Activated CD8-positive, alpha-beta memory T cell treated with anti-CD3 and anti-CD28 coated beads, Interleukin-2, amount 10 ng/mL, durations not matched to agents 7 days and 5 days (primary cell): ENCODE measurements at regions of chr19 and their contacts with region 1.

Region 1: DNA sequence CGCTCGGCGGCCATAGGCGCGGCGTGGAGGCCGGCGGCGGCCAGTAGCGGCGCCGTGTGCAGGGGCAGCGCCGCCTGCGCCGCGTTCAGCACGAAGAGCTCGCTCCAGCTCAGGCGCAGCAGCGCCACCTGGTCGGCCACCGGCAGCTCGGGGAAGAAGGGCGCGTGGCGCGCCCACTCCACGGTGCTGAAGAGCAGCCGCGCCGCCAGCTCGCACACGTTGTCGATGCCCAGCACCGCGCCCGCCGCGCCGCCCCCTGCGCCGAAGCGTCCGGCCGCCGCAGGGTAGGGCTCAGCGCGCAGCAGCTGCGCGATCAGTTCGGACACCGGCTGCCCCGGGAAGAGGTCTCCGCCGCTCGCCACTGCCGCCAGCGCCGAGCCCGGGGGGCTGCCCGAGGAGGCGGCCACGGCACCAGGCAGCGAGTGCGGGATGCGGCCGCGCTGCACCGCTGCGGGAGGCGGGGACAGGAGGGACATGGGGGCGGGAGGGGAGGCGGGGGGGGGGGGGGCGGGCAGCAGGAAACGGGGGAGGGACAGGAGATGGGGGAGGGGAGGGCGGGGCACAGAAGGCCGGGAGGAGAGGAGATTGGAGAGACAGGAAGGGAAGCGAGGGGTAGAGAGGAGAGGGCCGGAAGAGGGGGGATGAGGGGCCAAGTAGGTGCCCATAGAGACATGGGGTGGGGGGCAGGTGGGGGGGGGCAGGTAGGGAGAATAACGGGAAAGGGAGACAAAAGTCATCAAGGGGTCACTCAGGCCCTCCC is 9.8 kb downstream of the OCEL1 start:
- DNase-seq: peak; percentile 81
- ATAC-seq: peak; percentile 93
- H3K4me3 Mint-ChIP-seq: peak overlapping the region; percentile 70
- H3K27ac Mint-ChIP-seq: peak overlapping the region; percentile 66
- H3K4me1 Mint-ChIP-seq: peaks cover 5% of the 10 kb centered on the region
- H3K27me3 Mint-ChIP-seq: no peaks in the 10 kb centered on the region

Region 2: DNA sequence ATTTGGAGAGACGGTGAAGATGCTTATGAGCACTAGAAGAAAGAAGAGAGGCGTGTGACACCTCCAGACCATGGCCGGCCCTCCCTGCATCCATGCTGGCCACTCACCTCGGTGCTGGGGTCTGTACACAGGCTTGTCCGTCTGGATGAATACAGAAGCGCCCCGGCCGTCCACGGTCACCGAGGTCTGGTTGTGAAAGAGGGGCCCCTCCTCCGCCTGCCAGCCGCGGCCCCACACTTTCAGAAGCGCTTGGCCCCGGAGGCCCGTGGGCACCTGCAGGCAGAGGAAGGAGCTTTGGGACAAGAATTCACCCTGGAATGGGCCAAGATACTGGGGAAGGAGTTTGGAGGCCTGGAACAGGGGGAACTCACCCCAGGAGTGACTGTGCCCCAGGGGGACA is 224.3 kb before region 1 on chr19:
- CTCF ChIA-PET with region 1: no interaction called
- DNase-seq: no peak
- ATAC-seq: no peak
- H3K4me3 Mint-ChIP-seq: no peak overlapping the region
- H3K27ac Mint-ChIP-seq: no peak overlapping the region
- H3K4me1 Mint-ChIP-seq: no peaks in the 10 kb centered on the region
- H3K27me3 Mint-ChIP-seq: no peaks in the 10 kb centered on the region

Region 3: GRCh38 chr19:17069218-17069617 is 166.6 kb before region 1 on chr19:
- CTCF ChIA-PET with region 1: interaction called, 14 read pairs
- DNase-seq: no peak
- ATAC-seq: no peak
- H3K4me3 Mint-ChIP-seq: no peak overlapping the region
- H3K27ac Mint-ChIP-seq: no peak overlapping the region
- H3K4me1 Mint-ChIP-seq: peaks cover 46% of the 10 kb centered on the region
- H3K27me3 Mint-ChIP-seq: no peaks in the 10 kb centered on the region

Region 4: DNA sequence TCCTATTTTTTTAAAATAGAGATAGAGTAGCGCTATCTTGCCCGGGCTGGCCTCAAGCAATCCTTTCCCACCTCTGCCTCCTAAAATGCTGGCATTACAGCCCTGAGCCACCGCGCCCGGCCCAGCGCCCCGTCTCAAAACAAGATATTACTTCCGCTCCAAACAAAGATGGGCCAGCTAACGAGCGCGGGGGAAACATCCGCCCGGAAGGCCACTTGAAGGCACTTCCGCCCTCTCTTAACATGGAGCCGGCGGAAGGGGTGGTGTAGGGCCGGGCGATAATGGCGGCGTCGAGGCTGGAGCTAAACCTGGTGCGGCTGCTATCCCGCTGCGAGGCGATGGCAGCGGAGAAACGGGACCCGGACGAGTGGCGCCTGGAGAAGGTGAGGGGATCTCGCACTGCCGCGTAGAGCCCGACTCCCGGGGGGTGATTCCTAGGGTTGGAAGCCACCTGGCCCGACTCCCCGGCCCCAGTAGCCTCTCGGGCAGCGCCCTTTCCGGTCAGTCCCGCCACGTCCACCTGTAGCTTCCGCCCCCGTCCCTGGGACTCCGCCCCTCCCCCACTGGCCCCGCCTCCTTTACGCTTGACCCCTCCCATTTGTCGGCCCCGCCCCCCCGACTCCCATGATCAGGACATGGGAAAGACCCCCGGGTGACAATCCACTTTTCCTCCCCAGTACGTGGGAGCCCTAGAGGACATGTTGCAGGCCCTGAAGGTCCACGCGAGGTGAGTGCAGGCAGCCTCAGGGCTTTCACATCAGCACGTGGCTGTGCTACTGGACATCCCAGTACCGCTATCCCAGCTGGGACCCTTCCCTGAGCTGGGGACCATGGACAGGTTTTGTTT is 20.4 kb before region 1 on chr19 and contains the start of gene USE1:
- CTCF ChIA-PET with region 1: interaction called, 11 read pairs
- DNase-seq: peak; percentile 94
- ATAC-seq: peak; percentile 97
- H3K4me3 Mint-ChIP-seq: peak within 1 kb of the TSS; percentile 76
- H3K27ac Mint-ChIP-seq: peak within 1 kb of the TSS; percentile 94
- H3K4me1 Mint-ChIP-seq: peaks cover 15% of the 10 kb centered on the region
- H3K27me3 Mint-ChIP-seq: no peaks in the 10 kb centered on the region
- total RNA-seq, gene USE1: 22.1 to 23.6 TPM

Region 5: GRCh38 chr19:17260842-17261325 is 25.1 kb after region 1 on chr19:
- CTCF ChIA-PET with region 1: interaction called, 11 read pairs
- DNase-seq: peak; percentile 94
- ATAC-seq: peak; percentile 100
- H3K4me3 Mint-ChIP-seq: no peak overlapping the region
- H3K27ac Mint-ChIP-seq: no peak overlapping the region
- H3K4me1 Mint-ChIP-seq: peaks cover 13% of the 10 kb centered on the region
- H3K27me3 Mint-ChIP-seq: no peaks in the 10 kb centered on the region

Region 6: DNA sequence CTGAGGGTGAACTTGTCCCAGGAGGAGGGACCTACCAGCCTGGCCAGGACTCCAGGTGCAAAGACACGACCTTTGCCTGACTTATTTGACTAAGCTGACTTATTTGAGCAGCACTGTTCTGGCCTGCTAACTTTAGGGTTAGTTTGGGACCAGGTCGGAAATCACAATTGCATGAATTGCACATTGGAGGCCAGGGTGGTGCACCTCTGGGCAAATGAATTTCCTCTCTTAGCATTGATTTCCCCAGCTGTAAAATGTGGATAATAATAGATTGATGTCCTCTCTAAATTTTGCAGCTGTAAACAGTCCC is 171.0 kb after region 1 on chr19:
- CTCF ChIA-PET with region 1: no interaction called
- DNase-seq: peak; percentile 47
- ATAC-seq: no peak
- H3K4me3 Mint-ChIP-seq: peak overlapping the region; percentile 94
- H3K27ac Mint-ChIP-seq: peak overlapping the region; percentile 97
- H3K4me1 Mint-ChIP-seq: peaks cover 32% of the 10 kb centered on the region
- H3K27me3 Mint-ChIP-seq: no peaks in the 10 kb centered on the region